CD14-positive monocyte (primary cell): ENCODE measurements at regions of chr12 and their contacts with region 1.

Region 1: DNA sequence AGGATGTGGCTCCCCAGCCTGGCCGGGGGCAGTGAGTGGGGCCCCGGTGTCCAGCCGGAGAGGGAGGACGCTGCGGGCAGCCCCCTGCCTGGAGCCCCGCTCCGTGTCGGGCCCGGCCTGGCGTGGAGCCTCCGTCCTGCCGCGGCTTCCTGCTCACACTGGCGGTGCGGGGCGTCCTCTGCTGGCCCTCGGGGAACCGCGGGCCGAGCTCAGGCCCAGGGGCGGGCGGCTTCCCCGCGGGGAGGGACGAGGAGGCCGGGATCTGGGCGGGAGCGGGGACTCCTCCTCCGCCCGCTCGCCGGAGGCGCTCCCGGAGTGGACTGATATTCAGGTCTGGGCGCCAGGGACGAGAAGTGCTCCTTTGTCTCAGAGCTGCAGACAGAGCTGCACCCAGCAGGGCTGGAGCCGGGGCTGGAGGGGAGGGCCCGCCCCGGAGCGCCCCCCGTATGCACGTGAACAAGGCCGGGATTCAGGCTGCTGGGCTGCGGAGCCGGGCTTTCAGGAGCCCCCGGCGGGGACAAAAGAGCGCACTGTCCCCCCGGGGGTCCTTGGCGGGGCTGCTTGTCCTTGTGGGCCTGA is 2.2 kb downstream of the MMP17 start:
- DNase-seq: peak; percentile 58 to 69 (median 66)
- H3K4me3 ChIP-seq: peak overlapping the region; percentile 64 to 94 (median 69)
- H3K4me3 Mint-ChIP-seq: peak overlapping the region; percentile 69 to 81
- H3K27ac ChIP-seq: no peak overlapping the region
- H3K27ac Mint-ChIP-seq: no peak overlapping the region
- H3K4me1 ChIP-seq: peaks cover 29 to 38% of the 10 kb centered on the region in 2 donors
- H3K4me1 Mint-ChIP-seq: peaks cover 38% of the 10 kb centered on the region
- H3K27me3 ChIP-seq: peaks cover 0 to 15% of the 10 kb centered on the region in 2 donors
- H3K27me3 Mint-ChIP-seq: peaks cover 2 to 35% (median 35%) of the 10 kb centered on the region in 3 donors
- CTCF ChIP-seq: peak; percentile 88

Region 2: GRCh38 chr12:131104463-131105350 is 725.7 kb before region 1 on chr12:
- intact Hi-C with region 1: loop called in 1 of 2 experiments (anchors 10 kb)
- DNase-seq: peak; percentile 55 to 68 (median 58)
- H3K4me3 ChIP-seq: no peak overlapping the region
- H3K4me3 Mint-ChIP-seq: no peak overlapping the region
- H3K27ac ChIP-seq: no peak overlapping the region
- H3K27ac Mint-ChIP-seq: peak overlapping the region in 1 of 7 donors; percentile 70
- H3K4me1 ChIP-seq: peaks cover 43% of the 10 kb centered on the region in 2 donors
- H3K4me1 Mint-ChIP-seq: peaks cover 34% of the 10 kb centered on the region
- H3K27me3 ChIP-seq: peaks cover 0 to 12% of the 10 kb centered on the region in 2 donors
- H3K27me3 Mint-ChIP-seq: peaks cover 7 to 11% (median 9%) of the 10 kb centered on the region in 3 donors
- CTCF ChIP-seq: peak; percentile 84

Region 3: GRCh38 chr12:131710464-131711457 is 119.7 kb before region 1 on chr12 and contains the start of gene SFSWAP:
- intact Hi-C with region 1: loop called (anchors 5 to 10 kb)
- DNase-seq: peak; percentile 67 to 73 (median 73)
- H3K4me3 ChIP-seq: peak within 1 kb of the TSS; percentile 83 to 98 (median 95)
- H3K4me3 Mint-ChIP-seq: peak within 1 kb of the TSS; percentile 96 to 99
- H3K27ac ChIP-seq: peak within 1 kb of the TSS; percentile 73 to 98
- H3K27ac Mint-ChIP-seq: peak within 1 kb of the TSS; percentile 92 to 99 (median 98)
- H3K4me1 ChIP-seq: peaks cover 21 to 22% of the 10 kb centered on the region in 2 donors
- H3K4me1 Mint-ChIP-seq: peaks cover 20% of the 10 kb centered on the region
- H3K27me3 ChIP-seq: no peaks in the 10 kb centered on the region
- H3K27me3 Mint-ChIP-seq: peaks cover 0 to 2% (median 0%) of the 10 kb centered on the region in 3 donors
- CTCF ChIP-seq: no peak
- polyA plus RNA-seq, gene SFSWAP: 7.3 to 33.0 (median 10.7) TPM

Region 4: GRCh38 chr12:131773582-131774221 is 56.7 kb before region 1 on chr12:
- intact Hi-C with region 1: loop called (anchors 5 to 10 kb)
- DNase-seq: no peak
- H3K4me3 ChIP-seq: no peak overlapping the region
- H3K4me3 Mint-ChIP-seq: no peak overlapping the region
- H3K27ac ChIP-seq: peak overlapping the region in 1 of 2 donors; percentile 14
- H3K27ac Mint-ChIP-seq: peak overlapping the region in 4 of 7 donors; percentile 7 to 69 (median 64)
- H3K4me1 ChIP-seq: no peaks in the 10 kb centered on the region
- H3K4me1 Mint-ChIP-seq: peaks cover 14% of the 10 kb centered on the region
- H3K27me3 ChIP-seq: no peaks in the 10 kb centered on the region
- H3K27me3 Mint-ChIP-seq: no peaks in the 10 kb centered on the region
- CTCF ChIP-seq: no peak